ENCODE measurements at regions of chr13 and their contacts with region 1.

Region 1: DNA sequence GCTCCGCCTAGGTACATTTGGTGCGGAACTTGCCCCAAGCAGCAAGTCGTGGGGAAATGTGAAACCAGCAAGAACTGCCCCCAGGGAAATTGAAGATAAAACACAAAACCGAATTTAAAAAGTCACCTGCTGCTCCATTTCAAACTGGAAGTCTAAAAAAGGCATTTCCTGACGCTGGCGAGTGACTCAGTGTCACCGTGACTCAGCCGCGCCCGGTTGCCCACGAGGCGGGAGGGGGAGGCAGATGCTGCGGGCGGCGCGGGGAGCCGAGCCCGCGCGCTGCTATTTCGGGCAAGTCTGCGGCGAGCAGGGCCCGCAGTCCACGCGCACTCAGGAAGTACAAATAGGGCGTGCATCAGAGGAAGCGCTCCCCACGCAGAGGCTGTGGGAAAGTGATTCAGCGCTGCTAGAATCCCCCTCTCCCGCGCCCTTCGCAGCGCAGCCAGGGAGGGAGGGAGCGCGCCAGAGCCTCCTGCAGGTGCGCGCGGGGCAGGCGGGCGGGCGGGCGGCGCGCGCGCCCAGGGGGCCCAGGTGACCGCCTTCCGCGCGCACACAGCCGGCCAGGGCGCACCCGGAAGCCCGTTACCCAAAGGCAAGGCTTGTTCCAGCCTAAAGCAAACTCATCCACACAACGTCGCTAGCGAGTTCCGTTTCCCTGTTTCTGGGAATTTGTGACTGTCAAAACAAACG is 168.8 kb downstream of the COL4A1 start:
- DNase-seq: peak; percentile 61
- H3K4me3 ChIP-seq: peak overlapping the region; percentile 68
- H3K27ac ChIP-seq: peak overlapping the region; percentile 86
- H3K4me1 ChIP-seq: peaks cover 53% of the 10 kb centered on the region
- H3K27me3 ChIP-seq: no peaks in the 10 kb centered on the region
- CTCF ChIP-seq: peak; percentile 23

Region 2: DNA sequence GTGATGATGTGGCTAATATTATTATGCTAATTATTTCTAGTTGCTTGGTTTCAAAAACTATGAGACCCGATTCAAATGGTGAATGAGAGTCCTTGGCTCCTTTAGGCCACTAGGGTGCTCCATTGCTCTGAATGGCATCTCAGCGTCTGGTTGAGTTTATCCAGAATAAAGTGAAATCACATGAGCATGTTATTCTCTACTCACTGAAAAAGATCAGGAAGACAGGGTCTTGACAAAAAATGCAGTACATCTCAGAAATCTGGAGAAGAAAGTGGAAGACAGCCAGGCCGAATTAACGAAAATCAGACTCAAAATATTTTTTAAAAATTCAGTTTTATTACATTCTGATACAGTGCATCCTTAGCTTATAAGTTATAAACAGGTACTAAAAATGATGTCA is 992.5 kb before region 1 on chr13:
- intact Hi-C with region 1: loop called (anchors 10 kb)
- DNase-seq: no peak
- H3K4me3 ChIP-seq: no peak overlapping the region
- H3K27ac ChIP-seq: no peak overlapping the region
- H3K4me1 ChIP-seq: peaks cover 3% of the 10 kb centered on the region
- H3K27me3 ChIP-seq: peaks cover 27% of the 10 kb centered on the region
- CTCF ChIP-seq: peak; percentile 78

Region 3: GRCh38 chr13:109786457-109787134 is 351.6 kb before region 1 on chr13 and contains the start of gene IRS2:
- intact Hi-C with region 1: loop called (anchors 10 kb)
- DNase-seq: peak; percentile 92
- H3K4me3 ChIP-seq: peak within 1 kb of the TSS; percentile 78
- H3K27ac ChIP-seq: peak within 1 kb of the TSS; percentile 87
- H3K4me1 ChIP-seq: peaks cover 58% of the 10 kb centered on the region
- H3K27me3 ChIP-seq: peaks cover 13% of the 10 kb centered on the region
- CTCF ChIP-seq: no peak
- total RNA-seq, gene IRS2: 14.9 TPM

Region 4: GRCh38 chr13:109998726-109999533 is 139.2 kb before region 1 on chr13:
- intact Hi-C with region 1: no loop called
- DNase-seq: no peak
- H3K4me3 ChIP-seq: no peak overlapping the region
- H3K27ac ChIP-seq: no peak overlapping the region
- H3K4me1 ChIP-seq: no peaks in the 10 kb centered on the region
- H3K27me3 ChIP-seq: no peaks in the 10 kb centered on the region
- CTCF ChIP-seq: no peak

Region 5: DNA sequence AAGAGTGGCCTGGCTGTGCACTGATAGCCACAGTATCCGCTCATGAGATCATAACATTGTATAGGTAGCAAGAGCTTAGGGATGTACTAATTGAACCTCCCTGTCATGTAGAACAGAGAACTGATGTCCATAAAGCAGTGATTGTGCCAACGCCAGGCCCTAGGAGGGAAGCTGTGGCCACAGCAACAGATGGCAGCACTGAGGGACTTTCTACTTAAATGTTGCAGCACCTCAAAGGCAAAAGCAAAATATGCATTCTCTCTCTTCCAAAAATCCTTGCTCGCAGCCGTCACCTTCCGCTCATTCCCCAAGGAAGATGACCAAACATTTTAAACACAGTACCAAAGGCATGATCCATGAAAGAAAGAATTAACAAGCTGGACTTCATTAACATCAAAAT is 136.5 kb after region 1 on chr13:
- intact Hi-C with region 1: no loop called
- DNase-seq: no peak
- H3K4me3 ChIP-seq: no peak overlapping the region
- H3K27ac ChIP-seq: peak overlapping the region; percentile 57
- H3K4me1 ChIP-seq: peaks cover 96% of the 10 kb centered on the region
- H3K27me3 ChIP-seq: no peaks in the 10 kb centered on the region
- CTCF ChIP-seq: peak; percentile 62

Measured in left ventricle myocardium inferior (tissue), 1 donor.